ENCODE measurements at regions of chr20 and their contacts with region 1.

Region 1: GRCh38 chr20:62386383-62387218 is at the start of gene RPS21:
- DNase-seq: peak; percentile 92 to 94 (median 94)
- H3K4me3 ChIP-seq: peak within 1 kb of the TSS; percentile 88 to 90
- H3K4me3 Mint-ChIP-seq: peak within 1 kb of the TSS; percentile 90 to 95 (median 92)
- H3K27ac ChIP-seq: peak within 1 kb of the TSS; percentile 95
- H3K27ac Mint-ChIP-seq: peak within 1 kb of the TSS; percentile 91 to 98 (median 96)
- H3K4me1 ChIP-seq: peaks cover 36% of the 10 kb centered on the region
- H3K4me1 Mint-ChIP-seq: peaks cover 30 to 61% (median 47%) of the 10 kb centered on the region in 4 donors
- H3K27me3 ChIP-seq: no peaks in the 10 kb centered on the region
- H3K27me3 Mint-ChIP-seq: no peaks in the 10 kb centered on the region
- total RNA-seq, gene RPS21: 3,142 to 3,368 TPM

Region 2: DNA sequence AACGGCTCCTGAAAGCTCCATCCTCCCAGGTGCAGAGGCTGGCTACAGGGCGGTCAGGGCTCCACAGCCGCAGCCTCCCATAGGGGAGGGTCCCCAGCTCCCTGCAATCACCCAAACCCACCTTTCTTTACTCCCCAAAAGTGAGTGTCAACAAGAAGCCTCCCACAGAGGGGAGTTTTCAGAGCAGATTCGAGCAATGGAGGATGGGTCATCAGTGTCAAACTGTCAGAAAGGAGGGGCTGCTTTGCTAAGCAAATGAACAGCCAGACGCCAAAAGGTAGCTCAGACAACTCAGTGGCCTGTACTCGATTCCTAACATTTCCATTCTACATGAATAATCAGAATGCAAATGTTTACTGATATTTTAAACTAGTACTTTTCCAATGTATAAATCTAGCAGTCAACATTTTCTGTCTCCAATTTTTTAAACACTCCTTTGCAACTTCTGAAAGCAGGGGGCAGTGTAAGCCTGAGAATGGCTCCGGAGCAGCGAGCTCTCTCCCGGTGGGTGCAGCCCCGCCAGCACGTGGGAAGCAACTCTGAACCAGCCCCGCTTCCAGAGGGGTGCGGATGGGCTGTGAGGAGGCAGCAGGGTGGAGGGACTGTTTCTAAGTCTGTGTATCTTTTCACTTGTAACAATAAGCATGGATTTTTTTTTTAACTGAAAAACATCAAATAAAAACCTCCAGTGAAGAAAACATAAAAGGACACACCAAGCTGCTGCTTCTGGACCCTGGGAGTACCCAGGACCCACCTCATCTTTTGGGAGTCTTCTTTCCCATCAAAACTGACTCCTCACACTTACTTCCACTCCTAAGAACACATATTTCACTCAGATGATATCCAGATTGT is 375.8 kb before region 1 on chr20:
- CTCF ChIA-PET with region 1: interaction called, 11 read pairs
- POLR2A ChIA-PET with region 1: interaction called, 4 read pairs
- intact Hi-C with region 1: loop called (anchors 1 kb)
- DNase-seq: peak; percentile 63 to 70 (median 68)
- H3K4me3 ChIP-seq: no peak overlapping the region
- H3K4me3 Mint-ChIP-seq: peak overlapping the region in 1 of 8 donors; percentile 3
- H3K27ac ChIP-seq: no peak overlapping the region
- H3K27ac Mint-ChIP-seq: peak overlapping the region in 5 of 7 donors; percentile 4 to 76 (median 51)
- H3K4me1 ChIP-seq: no peaks in the 10 kb centered on the region
- H3K4me1 Mint-ChIP-seq: peaks cover 7 to 14% (median 9%) of the 10 kb centered on the region in 4 donors
- H3K27me3 ChIP-seq: no peaks in the 10 kb centered on the region
- H3K27me3 Mint-ChIP-seq: no peaks in the 10 kb centered on the region

Region 3: DNA sequence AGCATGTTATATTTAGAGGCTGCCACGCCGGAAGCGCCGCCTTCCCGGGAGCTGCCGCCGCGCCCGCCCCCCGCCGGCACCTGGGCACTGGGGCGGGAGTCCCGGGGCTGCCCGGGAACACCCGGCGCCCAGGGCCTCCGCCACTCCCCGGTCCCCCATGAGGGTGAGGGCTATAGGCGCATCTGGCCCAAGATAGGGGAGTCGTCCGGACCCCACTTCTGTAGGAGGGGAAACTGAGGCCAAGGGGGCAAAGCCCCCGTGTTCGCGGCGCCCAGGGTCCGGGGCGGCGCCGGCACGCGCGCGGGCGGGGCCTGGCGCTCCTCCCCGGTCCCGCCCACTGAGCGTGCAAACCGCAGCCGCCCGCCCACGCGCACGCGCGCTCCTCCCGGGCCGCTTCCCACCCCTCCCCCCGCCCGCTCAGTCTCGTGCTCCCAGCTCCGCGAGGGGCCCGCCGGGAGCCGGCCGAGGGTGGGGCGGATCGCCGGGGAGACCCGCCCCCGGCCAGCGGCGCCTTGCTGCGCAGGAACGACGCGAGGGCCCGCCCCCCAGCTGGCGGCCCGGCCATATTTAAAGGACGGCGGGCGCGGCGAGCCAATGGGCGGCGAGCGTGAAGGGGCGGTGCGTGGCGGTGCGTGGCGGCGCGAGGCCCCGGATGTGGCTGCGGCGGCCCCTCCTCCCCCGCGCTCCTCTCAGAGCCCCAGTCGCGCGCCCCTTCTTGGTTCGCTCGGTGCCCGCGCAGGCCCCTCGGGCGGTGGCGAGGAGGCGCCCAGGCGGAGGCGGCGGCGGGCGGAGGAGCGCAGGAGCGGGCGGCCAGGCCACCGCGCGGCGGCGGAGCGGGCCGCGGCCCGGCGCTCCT is 264.6 kb before region 1 on chr20 and contains the start of gene LSM14B:
- CTCF ChIA-PET with region 1: no interaction called
- POLR2A ChIA-PET with region 1: no interaction called
- intact Hi-C with region 1: loop called (anchors 5 kb)
- DNase-seq: peak; percentile 93 to 98 (median 97)
- H3K4me3 ChIP-seq: peak within 1 kb of the TSS; percentile 61 to 73
- H3K4me3 Mint-ChIP-seq: peak within 1 kb of the TSS; percentile 90 to 95 (median 92)
- H3K27ac ChIP-seq: peak within 1 kb of the TSS; percentile 76
- H3K27ac Mint-ChIP-seq: peak within 1 kb of the TSS; percentile 93 to 99 (median 97)
- H3K4me1 ChIP-seq: peaks cover 48% of the 10 kb centered on the region
- H3K4me1 Mint-ChIP-seq: peaks cover 32 to 71% (median 49%) of the 10 kb centered on the region in 4 donors
- H3K27me3 ChIP-seq: no peaks in the 10 kb centered on the region
- H3K27me3 Mint-ChIP-seq: no peaks in the 10 kb centered on the region
- total RNA-seq, gene LSM14B: 48.5 to 50.3 TPM

Region 4: DNA sequence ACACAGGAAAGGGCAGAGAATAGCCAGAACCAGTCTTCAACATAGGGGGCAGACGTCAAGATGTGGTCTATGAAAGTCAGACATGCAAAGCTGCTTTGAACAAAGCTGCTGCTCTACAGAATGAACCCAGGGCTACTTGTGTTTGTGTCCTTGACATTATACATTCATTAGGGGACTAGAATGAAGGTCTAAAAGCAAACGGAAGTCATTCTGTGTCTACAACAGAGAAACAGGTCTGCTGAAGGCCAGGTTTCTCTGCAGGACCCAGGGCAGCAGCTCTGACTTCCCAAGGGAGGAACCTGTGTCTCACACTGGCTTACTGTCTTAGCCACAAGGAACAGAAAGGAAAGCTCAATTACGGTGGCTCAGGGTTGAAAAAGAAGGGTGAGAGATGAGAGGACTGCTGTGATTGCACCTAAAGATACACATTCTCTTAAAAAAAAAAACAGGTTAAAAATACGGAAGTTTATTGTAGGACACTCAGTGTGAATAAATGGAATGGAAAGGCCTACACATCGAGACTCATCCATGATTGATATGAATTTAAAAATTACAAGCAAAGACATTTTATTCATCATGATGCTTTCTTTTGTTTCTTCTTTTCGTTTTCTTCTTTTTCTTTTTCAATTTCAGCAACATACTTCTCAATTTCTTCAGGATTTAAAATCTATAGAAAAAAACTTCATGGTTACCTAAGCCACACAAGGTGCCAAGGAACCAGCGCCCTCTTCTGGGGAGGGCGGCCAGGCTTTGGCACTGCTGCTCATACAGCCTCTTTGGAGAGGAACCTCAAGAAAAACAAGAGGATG is 250.1 kb before region 1 on chr20:
- CTCF ChIA-PET with region 1: interaction called, 3 read pairs
- POLR2A ChIA-PET with region 1: no interaction called
- intact Hi-C with region 1: loop called (anchors 5 kb)
- DNase-seq: peak; percentile 69 to 74 (median 74)
- H3K4me3 ChIP-seq: no peak overlapping the region
- H3K4me3 Mint-ChIP-seq: peak overlapping the region in 1 of 8 donors; percentile 50
- H3K27ac ChIP-seq: no peak overlapping the region
- H3K27ac Mint-ChIP-seq: peak overlapping the region; percentile 33 to 93 (median 91)
- H3K4me1 ChIP-seq: peaks cover 19% of the 10 kb centered on the region
- H3K4me1 Mint-ChIP-seq: peaks cover 30 to 57% (median 37%) of the 10 kb centered on the region in 4 donors
- H3K27me3 ChIP-seq: no peaks in the 10 kb centered on the region
- H3K27me3 Mint-ChIP-seq: no peaks in the 10 kb centered on the region

Region 5: DNA sequence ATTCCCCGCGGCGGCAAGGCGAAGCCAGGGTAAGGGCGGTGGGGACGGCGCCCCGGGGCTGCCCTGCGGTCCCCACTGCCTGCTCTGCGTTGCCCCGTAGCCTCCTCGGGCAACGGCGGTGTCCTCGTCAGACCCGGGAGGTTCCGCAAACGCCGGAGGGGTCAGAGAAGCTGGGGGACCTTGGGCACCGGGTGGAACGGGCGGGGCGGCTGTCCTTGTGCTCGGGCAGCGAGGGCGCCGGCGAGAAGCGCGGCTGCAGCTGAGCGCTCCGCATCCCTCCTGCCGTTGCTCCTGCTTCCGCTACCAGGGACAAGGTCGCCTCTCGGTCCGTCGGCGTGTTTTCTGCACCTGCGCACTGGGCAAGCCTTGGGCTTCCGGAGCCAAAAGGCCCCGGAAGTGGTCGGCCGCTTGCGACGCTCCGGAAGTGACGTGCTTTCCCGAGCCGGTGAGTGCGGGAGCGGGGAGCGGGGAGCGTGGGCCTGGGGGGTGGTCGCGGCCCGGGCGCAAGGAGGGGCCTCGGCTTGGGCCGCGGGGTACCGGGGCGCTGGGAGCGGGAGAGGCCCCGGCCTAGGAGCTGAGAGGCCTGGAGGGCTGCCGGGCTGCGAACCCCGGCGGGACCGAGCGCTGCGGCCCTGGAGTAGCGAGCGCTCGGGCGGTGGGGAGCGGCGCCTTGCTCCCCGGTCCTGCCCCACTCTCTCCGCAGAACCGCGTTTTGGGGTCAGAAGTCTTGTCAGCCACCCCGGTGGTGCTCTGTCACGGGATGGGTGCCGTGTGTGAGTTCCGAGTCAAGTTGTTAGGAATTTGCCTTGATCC is 203.8 kb before region 1 on chr20 and contains the start of gene MTG2:
- CTCF ChIA-PET with region 1: no interaction called
- POLR2A ChIA-PET with region 1: interaction called, 5 read pairs
- intact Hi-C with region 1: loop called (anchors 5 kb)
- DNase-seq: peak; percentile 91 to 96 (median 93)
- H3K4me3 ChIP-seq: peak within 1 kb of the TSS; percentile 53 to 92
- H3K4me3 Mint-ChIP-seq: peak within 1 kb of the TSS; percentile 91 to 97 (median 92)
- H3K27ac ChIP-seq: peak within 1 kb of the TSS; percentile 94
- H3K27ac Mint-ChIP-seq: peak within 1 kb of the TSS; percentile 93 to 98 (median 96)
- H3K4me1 ChIP-seq: peaks cover 22% of the 10 kb centered on the region
- H3K4me1 Mint-ChIP-seq: peaks cover 23 to 51% (median 37%) of the 10 kb centered on the region in 4 donors
- H3K27me3 ChIP-seq: no peaks in the 10 kb centered on the region
- H3K27me3 Mint-ChIP-seq: no peaks in the 10 kb centered on the region
- total RNA-seq, gene MTG2: 48.5 to 50.7 TPM

Region 6: GRCh38 chr20:62407221-62407992 is 20.8 kb after region 1 on chr20 and contains the start of gene CABLES2:
- CTCF ChIA-PET with region 1: interaction called, 3 read pairs
- POLR2A ChIA-PET with region 1: interaction called, 8 read pairs
- intact Hi-C with region 1: loop called (anchors 1 kb)
- DNase-seq: peak; percentile 90 to 94 (median 92)
- H3K4me3 ChIP-seq: peak within 1 kb of the TSS in 1 of 2 donors; percentile 67
- H3K4me3 Mint-ChIP-seq: peak within 1 kb of the TSS; percentile 77 to 85 (median 82)
- H3K27ac ChIP-seq: peak within 1 kb of the TSS; percentile 65
- H3K27ac Mint-ChIP-seq: peak within 1 kb of the TSS; percentile 53 to 90 (median 82)
- H3K4me1 ChIP-seq: peaks cover 34% of the 10 kb centered on the region
- H3K4me1 Mint-ChIP-seq: peaks cover 15 to 45% (median 29%) of the 10 kb centered on the region in 4 donors
- H3K27me3 ChIP-seq: no peaks in the 10 kb centered on the region
- H3K27me3 Mint-ChIP-seq: no peaks in the 10 kb centered on the region
- total RNA-seq, gene CABLES2: 5.9 to 7.5 TPM

Region 7: GRCh38 chr20:62642040-62642665 is 255.6 kb after region 1 on chr20 and contains the start of gene SLCO4A1:
- CTCF ChIA-PET with region 1: no interaction called
- POLR2A ChIA-PET with region 1: no interaction called
- intact Hi-C with region 1: loop called (anchors 1 kb)
- DNase-seq: peak; percentile 81 to 86 (median 83)
- H3K4me3 ChIP-seq: peak within 1 kb of the TSS; percentile 29 to 62
- H3K4me3 Mint-ChIP-seq: peak within 1 kb of the TSS; percentile 71 to 84 (median 78)
- H3K27ac ChIP-seq: peak within 1 kb of the TSS; percentile 22
- H3K27ac Mint-ChIP-seq: peak within 1 kb of the TSS in 6 of 7 donors; percentile 52 to 91 (median 60)
- H3K4me1 ChIP-seq: peaks cover 25% of the 10 kb centered on the region
- H3K4me1 Mint-ChIP-seq: peaks cover 0 to 14% (median 8%) of the 10 kb centered on the region in 4 donors
- H3K27me3 ChIP-seq: no peaks in the 10 kb centered on the region
- H3K27me3 Mint-ChIP-seq: peaks cover 0 to 4% of the 10 kb centered on the region in 2 donors
- total RNA-seq, gene SLCO4A1: 0.97 to 0.99 TPM